Right ventricle myocardium superior (tissue), 1 donor: ENCODE measurements at regions of chr22 and their contacts with region 1.

Region 1: GRCh38 chr22:46110215-46110614 is 40.1 kb upstream of the PPARA start:
- DNase-seq: no peak
- ATAC-seq: no peak

Region 2: DNA sequence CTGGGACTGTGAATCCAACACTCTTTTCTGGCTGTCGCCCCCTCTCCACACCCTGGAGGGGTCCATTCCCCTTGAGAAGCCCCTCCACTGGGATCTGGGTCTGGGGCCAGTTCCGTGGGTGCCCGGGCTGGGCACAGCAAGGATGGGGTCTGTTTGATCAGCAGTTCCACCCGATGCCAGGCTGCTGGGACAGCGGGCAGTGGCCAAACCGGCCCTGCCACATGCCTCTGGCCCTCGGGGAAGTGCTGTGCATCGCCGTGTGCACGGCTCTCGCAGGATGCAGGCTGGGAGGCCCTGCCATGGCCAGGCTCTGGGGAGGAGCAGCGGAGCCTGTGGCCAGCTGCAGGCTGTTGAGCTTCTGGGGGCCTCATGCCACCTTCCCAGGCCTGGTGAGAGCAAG is 190.8 kb before region 1 on chr22:
- intact Hi-C with region 1: no loop called
- DNase-seq: no peak
- ATAC-seq: no peak

Region 3: GRCh38 chr22:46079861-46080821 is 30.1 kb before region 1 on chr22:
- intact Hi-C with region 1: loop called (anchors 5 kb)
- DNase-seq: peak; percentile 84
- ATAC-seq: peak; percentile 38